Mammary epithelial cell (primary cell): ENCODE measurements at regions of chr1 and their contacts with region 1.

Region 1: DNA sequence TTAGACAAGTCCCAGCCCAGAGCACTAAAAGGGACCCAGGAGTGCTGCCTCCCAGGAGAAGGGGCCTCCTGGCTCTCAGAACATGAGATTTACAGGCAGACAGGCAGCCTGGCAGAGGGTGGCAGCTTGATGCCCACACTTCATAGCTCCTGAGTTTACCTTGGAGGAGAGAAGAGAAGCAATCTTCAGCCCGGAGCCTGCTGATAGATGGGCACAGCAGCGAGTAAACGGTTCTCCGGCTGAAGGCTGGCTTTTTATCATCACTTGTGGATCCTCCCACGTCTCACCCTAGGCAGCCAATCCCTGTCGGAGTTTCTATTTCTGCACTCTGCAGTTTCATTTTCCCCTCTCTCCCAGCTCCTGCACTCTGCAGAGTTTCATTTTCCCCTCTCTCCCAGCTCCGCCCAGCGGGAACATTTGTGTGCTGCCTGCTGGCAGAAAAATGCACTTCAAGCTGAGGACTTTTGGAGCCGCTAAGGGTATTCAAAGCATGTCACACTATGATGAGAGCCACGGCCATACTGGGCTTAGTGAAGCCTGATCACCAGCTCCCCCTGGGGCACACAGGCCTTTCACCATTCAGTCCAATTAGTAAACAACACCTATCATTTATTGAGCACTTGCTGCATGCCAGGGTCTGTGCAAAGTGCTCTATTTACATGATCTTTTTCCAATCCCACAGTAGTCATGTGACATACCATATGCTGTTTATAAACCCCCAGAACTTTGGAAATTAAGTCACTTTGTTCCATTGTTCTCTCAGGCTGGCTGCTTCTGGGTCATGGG is at the start of gene IFI6:
- DNase-seq: peak; percentile 94
- H3K4me3 ChIP-seq: peak within 1 kb of the TSS; percentile 30 to 54 (median 48)
- H3K27ac ChIP-seq: no peak within 1 kb of the TSS
- H3K4me1 ChIP-seq: peaks cover 15% of the 10 kb centered on the region
- H3K27me3 ChIP-seq: no peaks in the 10 kb centered on the region
- CTCF ChIP-seq: peak; percentile 24 to 35
- total RNA-seq, gene IFI6: 6.5 to 14.7 TPM

Region 2: GRCh38 chr1:27284425-27285273 is 387.5 kb before region 1 on chr1:
- CTCF ChIA-PET with region 1: interaction called, 23 read pairs
- dilution Hi-C with region 1: no loop called
- in situ Hi-C with region 1: no loop called
- intact Hi-C with region 1: no loop called
- DNase-seq: peak; percentile 55
- H3K4me3 ChIP-seq: no peak overlapping the region
- H3K27ac ChIP-seq: no peak overlapping the region
- H3K4me1 ChIP-seq: no peaks in the 10 kb centered on the region
- H3K27me3 ChIP-seq: no peaks in the 10 kb centered on the region
- CTCF ChIP-seq: peak; percentile 74 to 92

Region 3: GRCh38 chr1:27504588-27505419 is 167.4 kb before region 1 on chr1:
- CTCF ChIA-PET with region 1: no interaction called
- dilution Hi-C with region 1: no loop called
- in situ Hi-C with region 1: no loop called
- intact Hi-C with region 1: no loop called
- DNase-seq: peak; percentile 76
- H3K4me3 ChIP-seq: no peak overlapping the region
- H3K27ac ChIP-seq: peak overlapping the region; percentile 81
- H3K4me1 ChIP-seq: peaks cover 28% of the 10 kb centered on the region
- H3K27me3 ChIP-seq: no peaks in the 10 kb centered on the region
- CTCF ChIP-seq: no peak

Region 4: GRCh38 chr1:27525296-27526272 is 146.6 kb before region 1 on chr1:
- CTCF ChIA-PET with region 1: no interaction called
- dilution Hi-C with region 1: no loop called
- in situ Hi-C with region 1: no loop called
- intact Hi-C with region 1: no loop called
- DNase-seq: peak; percentile 69
- H3K4me3 ChIP-seq: no peak overlapping the region
- H3K27ac ChIP-seq: peak overlapping the region; percentile 81
- H3K4me1 ChIP-seq: peaks cover 88% of the 10 kb centered on the region
- H3K27me3 ChIP-seq: no peaks in the 10 kb centered on the region
- CTCF ChIP-seq: no peak

Region 5: DNA sequence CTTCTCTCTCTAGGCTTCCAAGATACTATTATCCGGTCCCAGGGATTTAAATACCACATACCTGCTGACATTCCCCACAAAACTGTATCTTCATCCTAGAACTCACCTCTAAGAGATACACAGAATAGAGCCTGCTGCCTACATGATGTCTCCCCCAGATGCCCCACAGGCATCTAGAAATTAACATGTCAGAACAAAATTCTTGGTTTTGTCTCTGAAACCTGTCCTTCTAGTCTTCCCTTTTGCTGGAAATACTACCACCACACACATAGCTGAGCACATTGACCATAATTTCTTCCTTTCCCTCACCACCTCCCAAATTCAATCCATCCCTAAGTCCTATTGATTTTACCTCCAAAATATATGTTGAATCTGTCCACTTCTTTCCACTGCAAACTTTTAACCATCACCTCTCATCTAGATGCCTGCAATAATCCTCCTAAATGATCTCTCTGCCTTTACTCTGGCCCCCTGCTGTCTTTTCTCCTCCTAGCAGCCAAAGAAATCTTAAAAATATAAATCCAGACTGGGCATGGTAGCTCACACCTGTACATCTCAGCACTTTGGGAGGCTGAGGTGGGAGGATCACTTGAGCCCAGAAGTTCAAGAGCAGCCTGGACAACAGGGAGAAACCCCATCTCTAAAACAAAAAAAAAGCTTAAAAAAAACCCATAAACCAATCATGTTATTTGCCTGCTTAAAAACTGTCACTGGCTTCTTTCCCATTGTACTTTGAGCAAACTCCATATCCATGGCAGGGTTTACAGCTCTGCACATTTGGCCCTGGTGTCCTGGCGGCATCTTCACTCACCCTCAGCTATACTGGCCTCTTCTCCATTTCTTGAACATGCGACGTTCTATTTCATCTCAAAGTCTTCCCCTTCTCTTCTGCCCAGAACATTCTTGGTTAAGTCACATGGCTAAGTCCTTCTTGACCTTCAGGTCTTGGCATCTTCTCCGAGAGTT is 47.4 kb after region 1 on chr1:
- CTCF ChIA-PET with region 1: interaction called, 8 read pairs
- dilution Hi-C with region 1: no loop called
- in situ Hi-C with region 1: loop called in 1 of 2 experiments (anchors 5 kb)
- intact Hi-C with region 1: loop called (anchors 1 kb)
- DNase-seq: peak; percentile 9
- H3K4me3 ChIP-seq: no peak overlapping the region
- H3K27ac ChIP-seq: no peak overlapping the region
- H3K4me1 ChIP-seq: peaks cover 7% of the 10 kb centered on the region
- H3K27me3 ChIP-seq: no peaks in the 10 kb centered on the region
- CTCF ChIP-seq: peak; percentile 39 to 59

Region 6: GRCh38 chr1:27772933-27773825 is 101.0 kb after region 1 on chr1 and contains the start of gene STX12:
- CTCF ChIA-PET with region 1: interaction called, 4 read pairs
- dilution Hi-C with region 1: no loop called
- in situ Hi-C with region 1: no loop called
- intact Hi-C with region 1: loop called (anchors 1 kb)
- DNase-seq: peak; percentile 100
- H3K4me3 ChIP-seq: peak within 1 kb of the TSS; percentile 79 to 98 (median 83)
- H3K27ac ChIP-seq: peak within 1 kb of the TSS; percentile 79
- H3K4me1 ChIP-seq: peaks cover 8% of the 10 kb centered on the region
- H3K27me3 ChIP-seq: no peaks in the 10 kb centered on the region
- CTCF ChIP-seq: no peak
- total RNA-seq, gene STX12: 39.1 to 59.8 TPM

Region 7: GRCh38 chr1:28877132-28877781 is 1205.1 kb after region 1 on chr1:
- CTCF ChIA-PET with region 1: no interaction called
- dilution Hi-C with region 1: no loop called
- in situ Hi-C with region 1: no loop called
- intact Hi-C with region 1: loop called (anchors 5 kb)
- DNase-seq: peak; percentile 72
- H3K4me3 ChIP-seq: no peak overlapping the region
- H3K27ac ChIP-seq: no peak overlapping the region
- H3K4me1 ChIP-seq: peaks cover 6% of the 10 kb centered on the region
- H3K27me3 ChIP-seq: no peaks in the 10 kb centered on the region
- CTCF ChIP-seq: peak; percentile 91 to 94